ENCODE measurements at regions of chr4 and their contacts with region 1.

Region 1: DNA sequence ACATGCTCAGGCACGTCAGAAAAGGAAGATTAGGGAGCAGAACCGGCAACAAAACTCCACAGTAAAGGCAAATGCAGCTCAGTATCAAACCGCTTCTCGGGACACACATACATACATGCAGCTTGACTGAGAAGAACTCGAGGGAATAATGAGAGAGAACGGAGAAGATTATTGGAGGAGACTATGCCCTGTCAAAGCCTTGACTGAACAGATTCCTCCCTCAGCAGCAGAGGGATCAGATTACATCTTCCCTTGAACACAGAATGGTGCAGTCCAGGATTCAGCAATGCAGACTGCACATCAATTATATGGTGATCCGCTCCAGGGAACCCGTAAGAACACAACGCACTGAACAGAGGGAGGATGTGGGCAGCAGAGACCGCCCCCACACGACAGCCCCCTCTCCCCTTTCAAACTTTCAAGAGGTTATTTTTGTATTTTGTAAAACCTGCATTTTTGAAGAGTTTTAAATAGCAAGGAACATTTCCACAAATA is 183.2 kb downstream of the FBXW7 start:
- DNase-seq: peak in 1 of 2 donors; percentile 50
- ATAC-seq: peak; percentile 95
- H3K4me3 ChIP-seq: peak overlapping the region; percentile 69 to 82
- H3K27ac ChIP-seq: peak overlapping the region in 1 of 2 donors; percentile 26
- H3K4me1 ChIP-seq: peaks cover 0 to 1% of the 10 kb centered on the region in 2 donors
- H3K27me3 ChIP-seq: no peaks in the 10 kb centered on the region

Region 2: GRCh38 chr4:151760712-151761527 is 591.7 kb before region 1 on chr4 and contains the start of gene GATB:
- intact Hi-C with region 1: loop called in 1 of 2 experiments (anchors 10 kb)
- DNase-seq: peak; percentile 95
- ATAC-seq: peak; percentile 98
- H3K4me3 ChIP-seq: peak within 1 kb of the TSS; percentile 54 to 99
- H3K27ac ChIP-seq: peak within 1 kb of the TSS in 1 of 2 donors; percentile 20
- H3K4me1 ChIP-seq: no peaks in the 10 kb centered on the region
- H3K27me3 ChIP-seq: no peaks in the 10 kb centered on the region
- total RNA-seq, gene GATB: 5.2 to 9.1 TPM

Measured in aorta (tissue), 5 donors.